ENCODE measurements at regions of chr4 and their contacts with region 1.

Region 1: DNA sequence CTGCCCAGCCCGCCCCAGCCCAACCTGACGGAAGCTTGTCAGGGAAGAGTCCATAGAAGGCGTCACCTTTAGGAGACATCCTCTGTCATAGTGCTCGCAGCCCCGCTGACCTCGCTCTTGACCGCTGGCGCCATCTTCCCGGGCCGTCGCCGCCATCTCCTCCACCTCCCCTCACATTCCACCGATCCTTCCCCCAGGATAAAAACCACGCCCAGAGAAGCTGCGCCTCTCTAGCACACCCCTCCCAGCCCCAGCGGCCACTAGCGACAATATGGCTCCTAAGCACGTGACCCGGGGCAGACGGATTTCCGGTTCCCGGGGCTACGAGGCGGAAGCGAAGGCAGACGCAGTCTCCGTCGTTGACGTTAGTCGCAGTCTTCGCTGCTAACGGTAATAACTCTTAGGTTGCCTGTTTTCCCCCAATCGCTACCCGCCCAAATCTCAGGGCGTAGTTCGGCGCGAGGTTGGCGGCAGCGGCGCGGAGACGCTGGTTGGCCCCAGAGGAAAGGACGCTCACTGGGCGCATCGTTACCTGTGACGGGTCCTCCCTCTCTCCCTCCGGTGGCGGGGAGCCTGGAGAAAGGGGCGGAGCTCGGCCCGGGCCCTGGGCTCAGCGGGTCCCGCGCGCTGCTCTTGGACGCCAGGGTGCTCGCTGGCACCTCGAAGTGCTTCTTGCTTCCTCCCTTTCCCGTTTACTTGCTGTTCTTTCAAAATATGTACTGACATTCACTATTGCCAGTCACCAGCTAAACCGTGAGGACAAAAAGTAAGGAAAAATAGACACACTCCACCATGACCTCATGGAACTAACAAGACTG is at the starts of genes RCHY1 and THAP6:
- DNase-seq: peak; percentile 98
- H3K4me3 Mint-ChIP-seq: no peak within 1 kb of the TSS
- H3K27ac Mint-ChIP-seq: no peak within 1 kb of the TSS
- H3K4me1 Mint-ChIP-seq: peaks cover 33% of the 10 kb centered on the region
- H3K27me3 Mint-ChIP-seq: no peaks in the 10 kb centered on the region
- CTCF ChIP-seq: no peak
- total RNA-seq, gene RCHY1: 29.1 and 38.3 TPM in 2 replicates
- total RNA-seq, gene THAP6: 27.6 and 30.0 TPM in 2 replicates

Region 2: GRCh38 chr4:75490155-75490554 is 24.2 kb before region 1 on chr4:
- CTCF ChIA-PET with region 1: no interaction called
- POLR2A ChIA-PET with region 1: interaction called, 34 read pairs
- intact Hi-C with region 1: no loop called
- DNase-seq: peak; percentile 29
- H3K4me3 Mint-ChIP-seq: no peak overlapping the region
- H3K27ac Mint-ChIP-seq: no peak overlapping the region
- H3K4me1 Mint-ChIP-seq: peaks cover 7% of the 10 kb centered on the region
- H3K27me3 Mint-ChIP-seq: no peaks in the 10 kb centered on the region
- CTCF ChIP-seq: peak; percentile 16

Region 3: GRCh38 chr4:75499900-75500299 is 14.4 kb before region 1 on chr4:
- CTCF ChIA-PET with region 1: interaction called, 4 read pairs
- POLR2A ChIA-PET with region 1: interaction called, 34 read pairs
- intact Hi-C with region 1: no loop called
- DNase-seq: no peak
- H3K4me3 Mint-ChIP-seq: no peak overlapping the region
- H3K27ac Mint-ChIP-seq: no peak overlapping the region
- H3K4me1 Mint-ChIP-seq: peaks cover 9% of the 10 kb centered on the region
- H3K27me3 Mint-ChIP-seq: no peaks in the 10 kb centered on the region
- CTCF ChIP-seq: no peak

Region 4: GRCh38 chr4:75525910-75526309 is 11.6 kb after region 1 on chr4:
- CTCF ChIA-PET with region 1: interaction called, 4 read pairs
- POLR2A ChIA-PET with region 1: interaction called, 35 read pairs
- intact Hi-C with region 1: no loop called
- DNase-seq: no peak
- H3K4me3 Mint-ChIP-seq: no peak overlapping the region
- H3K27ac Mint-ChIP-seq: no peak overlapping the region
- H3K4me1 Mint-ChIP-seq: no peaks in the 10 kb centered on the region
- H3K27me3 Mint-ChIP-seq: no peaks in the 10 kb centered on the region
- CTCF ChIP-seq: no peak